Activated CD4-positive, alpha-beta T cell treated with anti-CD3 and anti-CD28 coated beads for 36 hours (primary cell): ENCODE measurements at regions of chr17 and their contacts with region 1.

Region 1: DNA sequence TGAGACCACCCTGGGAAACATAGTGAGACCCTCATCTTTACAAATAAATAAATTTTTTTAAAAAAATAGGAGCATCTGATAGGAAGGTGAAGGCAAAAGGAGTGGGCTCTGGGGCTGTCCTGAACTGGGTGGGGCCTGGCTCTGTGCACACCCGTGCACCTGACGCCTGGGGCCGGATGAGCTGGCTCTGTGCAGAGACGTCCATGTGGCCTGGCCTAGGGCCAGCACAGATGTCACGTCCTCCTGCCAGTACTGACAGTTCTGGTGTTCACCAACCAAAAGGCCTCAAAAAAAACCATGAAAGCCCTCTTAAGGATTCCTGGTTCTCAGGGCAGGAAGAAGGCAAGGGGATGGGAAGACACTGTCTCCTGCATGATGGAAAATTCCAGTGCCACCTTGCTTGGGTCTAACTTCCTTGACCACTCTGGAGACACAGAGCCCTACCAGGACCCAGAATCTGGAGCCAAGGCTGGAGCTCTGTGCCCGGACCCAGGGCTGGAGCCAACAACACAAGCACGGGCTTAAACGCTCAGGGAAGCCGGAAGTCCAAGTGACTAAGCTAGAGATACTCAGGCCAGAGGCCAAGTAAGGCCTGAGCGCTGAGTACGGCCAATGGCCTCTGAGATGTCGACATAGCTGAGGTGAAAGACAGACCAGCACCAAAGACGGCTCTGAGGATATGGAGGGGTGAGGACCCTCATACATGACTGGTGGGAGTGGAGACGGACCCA is 32.9 kb downstream of the COPRS start:
- DNase-seq: peak; percentile 11
- ATAC-seq: peak; percentile 36
- H3K4me3 Mint-ChIP-seq: no peak overlapping the region
- H3K27ac Mint-ChIP-seq: no peak overlapping the region
- H3K4me1 Mint-ChIP-seq: no peaks in the 10 kb centered on the region
- H3K27me3 Mint-ChIP-seq: no peaks in the 10 kb centered on the region

Region 2: GRCh38 chr17:31715446-31715845 is 110.7 kb before region 1 on chr17:
- CTCF ChIA-PET with region 1: no interaction called
- POLR2A ChIA-PET with region 1: no interaction called
- intact Hi-C with region 1: loop called in 1 of 2 experiments (anchors 10 kb)
- DNase-seq: peak; percentile 10
- ATAC-seq: no peak
- H3K4me3 Mint-ChIP-seq: no peak overlapping the region
- H3K27ac Mint-ChIP-seq: no peak overlapping the region
- H3K4me1 Mint-ChIP-seq: no peaks in the 10 kb centered on the region
- H3K27me3 Mint-ChIP-seq: peaks cover 2% of the 10 kb centered on the region

Region 3: GRCh38 chr17:31802502-31802901 is 23.6 kb before region 1 on chr17:
- CTCF ChIA-PET with region 1: no interaction called
- POLR2A ChIA-PET with region 1: no interaction called
- intact Hi-C with region 1: no loop called
- DNase-seq: peak; percentile 13
- ATAC-seq: no peak
- H3K4me3 Mint-ChIP-seq: no peak overlapping the region
- H3K27ac Mint-ChIP-seq: no peak overlapping the region
- H3K4me1 Mint-ChIP-seq: no peaks in the 10 kb centered on the region
- H3K27me3 Mint-ChIP-seq: no peaks in the 10 kb centered on the region

Region 4: DNA sequence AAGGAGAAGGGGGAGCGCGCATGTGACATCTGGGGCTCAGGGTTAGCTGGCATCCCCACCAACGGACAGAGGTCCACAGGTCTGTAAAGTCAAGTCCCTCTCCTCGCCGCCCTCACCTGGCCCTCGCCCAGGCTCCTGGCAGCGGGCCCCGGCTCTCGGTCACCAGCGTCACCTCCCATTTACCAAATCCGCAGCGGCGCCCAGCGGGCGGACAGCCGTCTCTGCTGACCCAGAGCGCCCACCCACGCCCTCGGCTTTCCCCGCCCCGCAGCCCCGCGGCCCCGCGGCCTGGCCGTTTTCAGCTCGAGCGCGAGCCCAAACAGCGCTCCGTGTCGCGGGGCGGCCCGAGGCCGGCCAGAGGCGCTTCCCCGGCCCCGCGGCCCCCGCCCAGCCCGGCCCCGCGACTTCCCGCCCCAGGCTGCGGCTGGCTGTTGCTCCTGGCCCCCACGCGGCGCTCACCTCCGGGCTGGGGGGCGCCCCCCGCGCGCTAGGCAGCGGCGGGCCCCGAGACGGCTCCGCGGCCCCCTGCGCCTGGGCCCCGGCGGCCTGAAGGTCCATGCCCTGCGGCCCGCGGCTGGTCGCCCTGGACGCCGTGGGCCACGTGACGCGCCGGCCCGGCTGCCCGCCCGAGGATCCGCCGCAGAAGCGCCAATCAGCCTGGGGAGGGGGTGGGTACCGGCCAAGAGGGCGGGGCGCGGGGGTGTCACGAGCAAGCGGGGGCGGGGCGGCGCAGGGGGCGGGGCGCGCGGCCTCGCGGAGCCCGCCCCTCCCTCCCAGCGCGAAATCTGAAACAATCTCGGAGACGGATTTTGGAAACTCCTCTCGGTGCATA is 32.7 kb after region 1 on chr17 and contains the start of gene COPRS:
- CTCF ChIA-PET with region 1: no interaction called
- POLR2A ChIA-PET with region 1: no interaction called
- intact Hi-C with region 1: no loop called
- DNase-seq: peak; percentile 91
- ATAC-seq: peak; percentile 77
- H3K4me3 Mint-ChIP-seq: peak within 1 kb of the TSS; percentile 84
- H3K27ac Mint-ChIP-seq: peak within 1 kb of the TSS; percentile 86
- H3K4me1 Mint-ChIP-seq: peaks cover 19% of the 10 kb centered on the region
- H3K27me3 Mint-ChIP-seq: no peaks in the 10 kb centered on the region
- total RNA-seq, gene COPRS: 35.0 to 41.3 TPM

Region 5: GRCh38 chr17:31869797-31870568 is 43.9 kb after region 1 on chr17:
- CTCF ChIA-PET with region 1: no interaction called
- POLR2A ChIA-PET with region 1: no interaction called
- intact Hi-C with region 1: no loop called
- DNase-seq: no peak
- ATAC-seq: peak; percentile 16
- H3K4me3 Mint-ChIP-seq: no peak overlapping the region
- H3K27ac Mint-ChIP-seq: no peak overlapping the region
- H3K4me1 Mint-ChIP-seq: no peaks in the 10 kb centered on the region
- H3K27me3 Mint-ChIP-seq: no peaks in the 10 kb centered on the region